Activated CD4-positive, alpha-beta memory T cell treated with anti-CD3 and anti-CD28 coated beads for 36 hours (primary cell): ENCODE measurements at regions of chrX and their contacts with region 1.

Region 1: DNA sequence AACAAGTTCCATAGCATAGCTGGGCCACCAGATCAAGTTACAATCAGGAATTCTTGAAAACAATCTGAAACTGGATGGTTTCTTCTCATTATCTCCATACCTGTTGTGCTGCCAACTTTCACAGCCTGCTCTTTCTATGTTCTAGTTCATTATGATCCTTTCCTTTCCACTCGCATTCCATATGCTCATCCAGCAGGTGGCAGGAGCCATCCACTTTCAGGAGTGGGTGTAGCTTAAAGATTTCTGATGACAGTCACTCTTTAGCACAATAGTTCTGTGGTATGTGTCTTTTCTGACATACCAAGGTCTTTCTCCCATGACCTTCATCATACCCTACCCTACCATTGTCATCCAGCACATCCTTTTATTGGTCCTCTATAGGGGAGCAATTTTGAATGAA is 46.4 kb downstream of the PAGE2 start:
- DNase-seq: peak; percentile 42
- H3K4me3 Mint-ChIP-seq: no peak overlapping the region
- H3K27ac Mint-ChIP-seq: no peak overlapping the region
- H3K4me1 Mint-ChIP-seq: no peaks in the 10 kb centered on the region
- H3K27me3 Mint-ChIP-seq: no peaks in the 10 kb centered on the region

Region 2: DNA sequence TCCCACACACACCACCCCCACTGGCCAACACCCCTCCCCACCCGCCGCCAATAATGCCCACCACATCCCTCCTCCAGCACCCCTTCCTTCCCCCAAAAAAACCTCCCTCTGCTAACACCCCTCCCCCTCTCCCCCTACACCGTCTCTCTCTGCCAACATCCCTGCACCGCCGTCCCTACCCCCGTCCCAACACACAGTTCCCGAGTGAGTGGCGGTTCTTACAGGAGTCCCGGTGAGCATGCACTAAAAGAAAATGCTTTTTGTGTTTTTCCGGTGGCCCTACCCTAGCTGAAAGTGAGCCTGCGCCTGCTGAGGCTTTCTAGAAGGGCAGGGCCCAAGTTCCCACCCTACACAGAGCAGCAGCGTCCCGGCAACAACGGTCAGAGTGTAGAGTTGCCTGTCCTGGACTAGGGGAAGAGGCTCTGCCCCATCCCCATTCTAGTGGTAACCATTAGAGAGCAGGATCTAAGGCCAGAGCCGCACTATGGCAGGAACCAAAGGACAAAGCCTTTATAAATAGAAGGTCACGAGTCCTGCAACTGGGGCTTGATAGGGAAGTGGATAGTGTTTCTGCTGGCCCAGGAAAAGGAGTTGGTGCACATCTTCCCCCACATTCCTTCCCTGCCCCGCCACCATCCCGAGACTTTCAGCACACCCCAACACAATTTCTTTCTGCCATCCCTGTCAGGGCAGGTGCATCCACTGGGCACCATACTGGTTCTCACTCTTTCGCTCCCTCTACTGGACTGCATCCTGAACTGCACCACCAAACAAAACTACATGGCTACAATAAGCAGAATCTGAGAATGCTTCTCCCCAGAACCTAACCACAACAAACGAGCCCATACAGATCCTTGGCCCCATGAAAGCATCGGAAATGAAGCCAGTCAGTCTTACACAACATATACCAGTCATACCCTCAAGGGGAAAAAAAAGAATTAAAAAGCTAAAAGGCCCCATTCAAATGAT is 207.6 kb after region 1 on chrX:
- CTCF ChIA-PET with region 1: no interaction called
- POLR2A ChIA-PET with region 1: no interaction called
- intact Hi-C with region 1: loop called (anchors 5 kb)
- DNase-seq: peak; percentile 56
- H3K4me3 Mint-ChIP-seq: no peak overlapping the region
- H3K27ac Mint-ChIP-seq: no peak overlapping the region
- H3K4me1 Mint-ChIP-seq: peaks cover 17% of the 10 kb centered on the region
- H3K27me3 Mint-ChIP-seq: no peaks in the 10 kb centered on the region